Posterior vena cava (tissue), 2 donors: ENCODE measurements at regions of chr12 and their contacts with region 1.

Region 1: DNA sequence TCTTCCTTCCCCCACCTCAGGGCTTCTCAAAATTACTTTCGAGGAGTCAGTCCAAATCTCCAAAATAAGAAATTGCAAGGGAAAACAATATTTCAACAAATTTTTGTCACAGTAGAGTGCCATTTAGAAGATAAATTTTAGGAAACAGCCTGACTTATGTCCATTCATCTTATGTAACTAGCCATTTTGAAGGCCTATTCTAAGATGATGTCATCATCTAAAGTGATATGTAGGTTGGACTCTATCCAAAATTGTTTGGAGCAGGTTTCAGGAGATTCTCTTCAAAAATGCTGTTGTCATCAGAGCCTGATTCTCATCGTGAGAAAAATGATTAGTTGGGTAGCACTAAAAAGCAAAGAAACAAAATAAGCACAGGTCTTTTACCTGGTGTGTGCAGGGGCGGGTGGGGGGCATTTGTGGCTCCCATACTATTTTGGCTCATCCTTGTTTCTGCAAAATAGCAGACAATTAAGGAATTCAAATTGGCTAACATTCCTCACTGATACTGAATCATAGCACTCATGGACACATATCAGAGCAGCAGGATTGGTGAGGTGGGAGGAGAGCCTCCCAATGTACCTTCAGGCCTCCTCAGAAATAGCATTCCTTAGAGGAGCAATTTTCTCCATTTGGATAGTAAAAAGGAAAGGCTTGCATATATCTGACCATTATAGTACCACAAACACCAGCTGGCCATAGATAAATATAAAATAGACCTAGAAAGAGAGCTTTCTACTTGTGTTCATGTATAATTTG is 360.9 kb upstream of the NAV3 start:
- DNase-seq: no peak

Region 2: DNA sequence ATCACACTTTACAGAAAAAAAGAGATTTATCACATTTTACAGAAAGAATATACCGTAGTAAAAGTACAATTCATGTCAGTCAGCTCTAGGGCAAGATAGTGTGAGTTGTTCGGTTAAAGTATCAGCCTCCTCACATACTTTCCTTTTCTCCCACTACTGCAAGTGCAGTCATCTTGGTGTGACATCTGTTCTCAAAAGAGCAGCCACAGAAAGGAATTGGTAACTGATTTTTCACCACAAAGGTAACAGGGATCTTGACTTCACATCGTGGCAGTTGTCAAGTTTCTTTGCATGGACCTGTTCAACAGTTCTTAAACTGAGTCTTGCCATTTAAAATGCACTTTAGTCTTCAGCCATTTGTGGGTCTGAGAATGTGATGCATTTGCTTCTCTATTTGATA is 399.4 kb before region 1 on chr12:
- intact Hi-C with region 1: loop called in 1 of 2 experiments (anchors 5 kb)
- DNase-seq: no peak